Psoas muscle (tissue), 8 donors: ENCODE measurements at regions of chr12 and their contacts with region 1.

Region 1: DNA sequence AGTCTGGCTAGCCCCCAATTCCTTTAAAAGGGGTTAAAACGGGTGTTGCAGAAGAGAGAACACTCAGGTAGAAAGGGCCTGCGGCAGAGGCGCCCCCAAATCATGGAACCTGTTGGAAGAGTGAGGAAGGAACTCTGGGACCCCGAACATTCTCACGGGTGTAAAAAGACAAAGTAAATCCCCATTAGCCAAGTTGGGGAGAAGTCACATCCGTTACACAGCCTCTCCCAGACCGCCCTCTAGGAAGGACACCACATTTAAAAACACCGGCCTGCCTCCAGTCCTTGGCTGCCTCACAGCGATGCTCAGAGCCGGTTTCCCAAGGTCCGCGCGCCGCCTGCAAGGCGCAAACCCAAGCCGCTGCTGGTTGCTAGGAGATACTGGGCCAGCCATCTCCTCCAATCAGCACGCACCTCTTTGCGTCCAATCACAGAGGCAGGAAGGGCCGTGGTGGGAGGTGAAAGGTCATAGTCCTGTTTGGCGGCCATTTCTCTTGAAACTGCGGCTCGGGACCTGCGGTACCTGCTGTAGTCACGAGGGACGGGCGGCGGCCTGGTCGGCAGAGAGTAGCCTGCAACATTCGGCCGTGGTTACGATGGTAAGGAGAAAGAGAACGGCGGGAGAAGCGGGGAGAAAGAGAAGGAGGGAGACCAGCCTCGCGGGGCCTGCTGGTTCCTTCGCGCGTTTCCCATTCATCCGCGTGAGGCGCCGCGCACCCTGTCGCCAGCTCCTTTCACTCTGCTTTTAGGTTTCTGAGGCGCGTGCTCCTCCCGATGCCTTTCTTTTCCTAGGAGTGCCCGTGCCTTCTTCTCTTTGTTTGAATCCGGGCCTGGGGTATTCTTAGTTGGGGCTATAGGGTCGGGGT is at the start of gene SNRPF:
- DNase-seq: peak; percentile 92 to 96
- ATAC-seq: peak; percentile 100
- H3K4me3 ChIP-seq: peak within 1 kb of the TSS; percentile 74
- H3K27ac ChIP-seq: peak within 1 kb of the TSS; percentile 75
- H3K4me1 ChIP-seq: peaks cover 10% of the 10 kb centered on the region
- H3K27me3 ChIP-seq: no peaks in the 10 kb centered on the region
- CTCF ChIP-seq: no peak
- total RNA-seq, gene SNRPF: 8.8 to 13.7 (median 11.3) TPM

Region 2: GRCh38 chr12:95896846-95897245 is 38.1 kb after region 1 on chr12:
- intact Hi-C with region 1: no loop called
- DNase-seq: no peak
- ATAC-seq: no peak
- H3K4me3 ChIP-seq: no peak overlapping the region
- H3K27ac ChIP-seq: no peak overlapping the region
- H3K4me1 ChIP-seq: no peaks in the 10 kb centered on the region
- H3K27me3 ChIP-seq: peaks cover 0 to 3% (median 0%) of the 10 kb centered on the region in 3 donors
- CTCF ChIP-seq: no peak

Region 3: DNA sequence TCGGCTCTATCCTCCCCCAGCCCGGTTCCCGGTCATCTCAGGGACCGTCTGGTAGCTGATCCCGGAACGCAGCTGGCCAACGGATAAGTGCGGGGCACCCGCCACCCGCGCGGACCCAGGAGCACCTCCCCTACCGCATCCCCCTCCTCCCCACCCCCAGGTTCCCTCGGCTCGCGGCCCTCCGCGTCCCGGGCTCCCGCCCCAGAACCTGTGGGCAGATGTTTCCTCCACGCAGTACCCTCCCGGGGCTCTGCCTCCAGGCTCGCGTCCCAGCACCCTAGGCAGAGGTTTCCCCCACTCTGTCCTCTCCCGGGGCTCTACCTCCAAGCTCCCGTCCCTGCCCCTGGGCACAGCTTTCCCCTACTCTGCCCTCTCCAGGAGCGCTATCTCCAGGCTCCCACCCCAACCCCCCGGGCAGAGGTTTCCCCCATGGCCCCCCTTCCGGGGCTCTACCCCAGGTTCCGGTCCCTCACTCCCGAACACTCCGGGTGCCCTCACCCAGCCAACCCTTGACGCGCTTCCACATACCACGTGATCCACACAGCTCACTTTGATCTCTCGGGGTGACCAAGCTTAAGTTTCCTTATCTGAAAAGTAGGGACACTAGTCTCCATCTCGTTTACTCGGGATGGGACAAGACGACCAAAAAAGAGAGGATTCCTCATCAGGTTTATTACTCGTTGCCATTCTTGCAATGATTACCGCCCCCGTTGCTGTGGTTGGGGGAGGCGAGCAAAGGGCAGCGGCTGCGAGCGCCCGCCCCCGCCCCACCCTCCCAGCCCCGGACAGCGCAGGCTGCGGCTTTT is 84.0 kb after region 1 on chr12 and contains the start of gene CCDC38:
- intact Hi-C with region 1: loop called in 1 of 2 experiments (anchors 10 kb)
- DNase-seq: peak; percentile 81 to 91
- ATAC-seq: peak; percentile 96 to 99 (median 99)
- H3K4me3 ChIP-seq: peak within 1 kb of the TSS; percentile 97
- H3K27ac ChIP-seq: peak within 1 kb of the TSS; percentile 76
- H3K4me1 ChIP-seq: no peaks in the 10 kb centered on the region
- H3K27me3 ChIP-seq: no peaks in the 10 kb centered on the region
- CTCF ChIP-seq: no peak
- total RNA-seq, gene CCDC38: 0.08 to 0.30 TPM in 2 of 4 donors, not detected in the others

Region 4: GRCh38 chr12:96070670-96071279 is 212.1 kb after region 1 on chr12:
- intact Hi-C with region 1: no loop called
- DNase-seq: no peak
- ATAC-seq: no peak
- H3K4me3 ChIP-seq: no peak overlapping the region
- H3K27ac ChIP-seq: no peak overlapping the region
- H3K4me1 ChIP-seq: no peaks in the 10 kb centered on the region
- H3K27me3 ChIP-seq: no peaks in the 10 kb centered on the region
- CTCF ChIP-seq: no peak